WTC11 (cell line): ENCODE measurements at regions of chr12 and their contacts with region 1.

Region 1: DNA sequence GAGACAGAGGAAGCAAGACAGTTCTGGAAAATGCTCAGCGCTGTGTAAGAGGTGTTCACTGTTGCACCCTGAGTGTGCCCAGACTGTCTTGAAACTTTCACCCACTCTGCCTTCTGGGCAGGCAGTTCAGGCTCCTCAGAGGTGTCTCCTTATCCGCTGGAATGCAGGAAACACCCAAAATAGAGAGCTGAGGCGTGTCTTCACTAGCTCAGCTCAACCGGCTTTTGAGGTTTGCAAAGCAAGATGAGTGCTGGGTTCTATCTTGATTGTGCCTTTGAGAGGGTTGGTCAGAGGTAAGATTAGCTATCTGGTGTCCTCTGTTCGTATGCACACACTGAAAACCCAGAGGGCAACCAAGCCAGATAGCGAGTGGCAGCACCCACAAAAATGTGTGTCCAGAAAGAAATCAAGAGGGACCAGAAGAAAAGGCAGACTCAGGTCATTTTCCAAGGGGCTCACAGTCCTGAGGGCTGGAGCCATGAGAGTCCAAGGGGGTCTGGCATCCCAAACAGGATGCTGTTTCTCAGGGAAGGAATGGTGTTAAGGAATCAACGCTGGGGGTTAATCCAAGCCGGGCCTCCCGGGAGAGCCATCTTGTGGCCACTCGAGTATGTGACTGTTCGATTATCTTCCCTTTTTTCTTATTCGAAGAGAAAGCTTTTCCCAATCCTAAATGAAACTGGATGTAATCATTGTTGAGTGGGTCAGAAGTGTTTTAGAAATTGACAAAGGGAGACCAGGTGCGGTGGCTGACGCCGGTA is 47.1 kb downstream of the TBX3 start:
- DNase-seq: peak; percentile 38
- ATAC-seq: peak; percentile 66
- H3K4me3 Mint-ChIP-seq: no peak overlapping the region
- H3K27ac Mint-ChIP-seq: no peak overlapping the region
- H3K4me1 Mint-ChIP-seq: peaks cover 50% of the 10 kb centered on the region
- H3K27me3 Mint-ChIP-seq: peaks cover 37% of the 10 kb centered on the region
- CTCF ChIP-seq: no peak

Region 2: DNA sequence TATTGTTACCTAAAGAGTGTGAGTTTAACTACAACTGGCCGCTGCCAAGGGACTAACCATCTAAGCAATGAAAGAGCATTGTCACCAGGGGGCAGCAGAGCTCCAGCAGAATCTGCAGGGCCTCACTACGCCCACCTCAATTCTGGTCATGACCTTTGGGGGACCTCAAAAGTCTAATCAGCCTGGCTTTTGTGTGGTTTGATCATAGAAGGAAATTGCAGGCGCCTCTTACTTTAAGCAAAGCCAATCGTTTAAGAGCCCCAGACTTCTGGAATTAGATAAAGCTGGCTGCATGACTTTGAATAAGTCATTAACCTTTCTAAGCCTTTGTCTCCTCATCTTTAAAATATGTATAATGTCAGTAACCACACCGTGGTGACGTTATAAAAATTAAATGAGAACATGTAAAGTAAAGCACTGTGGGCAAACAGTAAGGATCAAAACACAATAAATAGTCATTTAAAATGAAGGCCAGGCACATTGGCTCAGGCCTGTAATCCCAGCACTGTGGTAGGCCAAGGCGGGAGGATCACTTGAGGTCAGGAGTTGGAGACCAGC is 11.5 kb before region 1 on chr12:
- CTCF ChIA-PET with region 1: interaction called, 18 read pairs
- POLR2A ChIA-PET with region 1: no interaction called
- DNase-seq: peak; percentile 83
- ATAC-seq: peak; percentile 96
- H3K4me3 Mint-ChIP-seq: no peak overlapping the region
- H3K27ac Mint-ChIP-seq: no peak overlapping the region
- H3K4me1 Mint-ChIP-seq: no peaks in the 10 kb centered on the region
- H3K27me3 Mint-ChIP-seq: peaks cover 3% of the 10 kb centered on the region; the same call in 1 of the 2 replicates
- CTCF ChIP-seq: peak; percentile 89

Region 3: DNA sequence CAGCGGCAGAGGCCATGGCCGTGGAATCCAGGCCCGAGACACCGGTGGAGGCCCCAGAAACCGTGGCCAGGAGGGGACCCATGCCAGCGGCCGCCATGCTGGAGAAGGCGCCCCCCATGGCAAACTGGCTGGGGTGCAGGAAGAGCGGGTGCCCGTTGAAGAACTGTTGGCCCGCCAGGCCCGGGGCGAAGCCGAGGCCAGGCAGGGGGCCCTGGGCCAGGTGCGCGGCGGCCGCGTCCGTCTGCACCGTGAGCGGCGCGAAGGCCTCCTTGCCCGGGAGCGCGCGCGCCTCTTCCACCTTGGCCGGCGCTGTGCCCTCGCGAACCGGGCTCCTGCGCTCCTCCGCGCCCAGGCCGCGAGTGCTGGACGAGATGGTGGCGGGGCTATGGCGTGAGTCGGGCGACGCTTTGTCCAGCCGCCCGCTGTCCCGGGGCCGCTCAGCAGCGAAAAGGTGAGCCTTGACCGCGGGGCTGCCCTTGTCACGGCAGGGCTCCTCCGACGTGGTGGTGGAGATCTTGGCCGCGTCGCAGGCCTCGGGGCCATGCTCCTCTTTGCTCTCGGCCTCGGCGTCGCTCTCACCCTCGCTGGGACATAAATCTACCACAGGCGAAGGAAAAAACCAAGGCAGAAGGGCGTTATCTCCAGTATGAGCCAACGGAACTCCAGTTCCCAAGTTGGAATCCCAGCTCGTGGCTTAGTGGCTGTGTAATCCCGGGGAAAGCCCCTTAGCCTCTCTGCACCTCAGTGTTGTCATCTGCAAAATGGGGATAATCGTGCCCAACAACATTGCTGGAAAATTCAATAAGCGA is 37.5 kb after region 1 on chr12:
- CTCF ChIA-PET with region 1: no interaction called
- POLR2A ChIA-PET with region 1: no interaction called
- DNase-seq: no peak
- ATAC-seq: peak; percentile 29
- H3K4me3 Mint-ChIP-seq: peak overlapping the region; percentile 47
- H3K27ac Mint-ChIP-seq: no peak overlapping the region
- H3K4me1 Mint-ChIP-seq: peaks cover 83% of the 10 kb centered on the region
- H3K27me3 Mint-ChIP-seq: peaks cover 100% of the 10 kb centered on the region
- CTCF ChIP-seq: no peak

Region 4: DNA sequence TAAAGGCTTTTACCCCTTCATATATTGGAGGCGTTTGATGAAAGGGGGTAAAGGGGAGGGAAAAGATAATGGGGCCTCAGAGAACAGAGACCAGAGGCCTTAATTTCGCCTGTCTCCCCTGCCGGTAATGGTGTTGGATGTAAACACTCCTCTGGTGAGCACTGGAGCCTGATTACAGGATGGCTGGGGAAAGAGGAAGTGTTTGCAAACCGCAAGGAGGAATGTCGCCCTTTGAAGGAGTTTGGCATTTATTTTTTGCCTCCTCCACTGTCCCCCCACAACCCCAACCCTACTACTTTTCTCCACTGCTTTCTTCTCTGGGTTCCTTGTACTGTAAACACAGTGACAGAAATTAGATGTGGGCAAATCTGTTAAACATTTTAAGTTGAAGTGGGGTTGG is 258.9 kb after region 1 on chr12:
- CTCF ChIA-PET with region 1: no interaction called
- POLR2A ChIA-PET with region 1: no interaction called
- DNase-seq: no peak
- ATAC-seq: no peak
- H3K4me3 Mint-ChIP-seq: no peak overlapping the region
- H3K27ac Mint-ChIP-seq: no peak overlapping the region
- H3K4me1 Mint-ChIP-seq: peaks cover 12% of the 10 kb centered on the region
- H3K27me3 Mint-ChIP-seq: no peaks in the 10 kb centered on the region
- CTCF ChIP-seq: no peak